ENCODE measurements at regions of chr13 and their contacts with region 1.

Region 1: DNA sequence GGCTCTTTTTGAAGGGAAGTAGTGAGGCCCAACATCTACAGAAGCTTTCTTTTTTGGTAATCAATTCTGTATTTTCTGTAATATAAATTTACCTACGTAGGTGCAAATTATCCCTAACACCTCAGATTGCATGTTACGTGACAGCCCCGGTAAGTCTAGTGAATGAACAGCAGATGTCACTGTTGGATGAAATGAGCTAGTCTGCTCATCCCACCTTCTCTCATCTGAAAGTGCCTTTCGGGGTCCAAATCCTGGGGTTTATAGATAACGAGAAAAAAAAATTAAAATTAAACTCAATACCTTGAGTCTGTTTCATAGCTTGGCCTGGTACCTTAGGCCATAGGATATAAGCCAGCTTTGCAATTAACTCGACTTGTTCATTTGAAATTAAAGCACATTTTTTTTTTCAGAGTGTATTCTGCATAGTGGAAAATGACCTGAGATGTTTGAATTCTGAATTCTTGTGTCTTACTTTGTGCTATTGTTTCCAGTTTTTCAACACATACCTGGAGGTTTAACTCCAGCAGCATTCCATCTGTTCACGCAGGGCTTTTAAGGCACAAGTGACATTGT is 548.2 kb downstream of the GPC5 start:
- DNase-seq: no peak
- H3K4me3 ChIP-seq: no peak overlapping the region
- H3K27ac ChIP-seq: no peak overlapping the region
- H3K4me1 ChIP-seq: no peaks in the 10 kb centered on the region
- H3K27me3 ChIP-seq: no peaks in the 10 kb centered on the region
- CTCF ChIP-seq: peak; percentile 3 to 70 (median 70)
- EP300 ChIP-seq: no peak
- POLR2A ChIP-seq: no peak
- RAD21 ChIP-seq: peak; percentile 85 to 87

Region 2: GRCh38 chr13:91725646-91726045 is 220.9 kb before region 1 on chr13:
- CTCF ChIA-PET with region 1: no interaction called
- POLR2A ChIA-PET with region 1: no interaction called
- DNase-seq: no peak
- H3K4me3 ChIP-seq: no peak overlapping the region
- H3K27ac ChIP-seq: no peak overlapping the region
- H3K4me1 ChIP-seq: no peaks in the 10 kb centered on the region
- H3K27me3 ChIP-seq: no peaks in the 10 kb centered on the region
- CTCF ChIP-seq: no peak
- EP300 ChIP-seq: no peak
- POLR2A ChIP-seq: no peak
- RAD21 ChIP-seq: no peak

Region 3: DNA sequence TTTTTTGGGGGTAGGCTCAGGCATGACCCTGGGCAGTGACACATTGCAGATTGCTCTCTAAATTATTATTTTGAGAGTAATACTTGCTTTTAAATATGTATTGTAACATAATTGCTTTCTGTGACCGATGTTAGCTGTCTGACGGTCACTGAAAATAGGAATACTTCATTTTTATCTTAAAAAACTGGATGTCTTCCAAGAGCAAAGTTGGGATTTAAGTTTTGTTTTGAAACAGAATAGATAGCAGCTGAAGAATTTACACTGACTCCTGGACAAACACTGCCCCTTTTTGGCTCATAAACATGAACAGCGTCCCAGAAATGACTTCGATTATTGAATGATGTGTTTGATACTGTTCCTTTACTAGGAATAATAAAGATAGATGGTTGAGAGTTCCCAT is 12.2 kb before region 1 on chr13:
- CTCF ChIA-PET with region 1: interaction called, 15 read pairs
- POLR2A ChIA-PET with region 1: no interaction called
- DNase-seq: no peak
- H3K4me3 ChIP-seq: no peak overlapping the region
- H3K27ac ChIP-seq: no peak overlapping the region
- H3K4me1 ChIP-seq: no peaks in the 10 kb centered on the region
- H3K27me3 ChIP-seq: no peaks in the 10 kb centered on the region
- CTCF ChIP-seq: no peak
- EP300 ChIP-seq: no peak
- POLR2A ChIP-seq: no peak
- RAD21 ChIP-seq: no peak

Region 4: DNA sequence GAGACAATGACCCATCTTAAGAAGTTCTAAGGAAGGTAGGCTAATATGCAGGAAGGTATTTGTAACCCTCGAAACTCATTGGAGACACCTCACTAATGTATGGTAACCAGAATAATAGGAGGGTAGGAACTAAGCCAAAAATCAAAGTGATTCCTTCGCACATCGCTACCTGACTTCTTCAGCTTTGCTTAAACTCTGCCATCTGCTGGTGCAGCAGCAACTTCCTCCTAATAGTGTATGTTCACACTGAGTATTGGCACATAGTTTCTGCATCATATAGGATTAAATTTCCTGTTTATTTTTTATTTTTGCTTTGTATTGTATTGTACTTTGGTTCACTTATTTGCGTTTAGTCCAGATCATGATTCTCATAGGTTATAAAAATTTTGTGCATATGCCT is 128.1 kb after region 1 on chr13:
- CTCF ChIA-PET with region 1: interaction called, 24 read pairs
- POLR2A ChIA-PET with region 1: no interaction called
- DNase-seq: no peak
- H3K4me3 ChIP-seq: no peak overlapping the region
- H3K27ac ChIP-seq: no peak overlapping the region
- H3K4me1 ChIP-seq: no peaks in the 10 kb centered on the region
- H3K27me3 ChIP-seq: peaks cover 0 to 1% (median 0%) of the 10 kb centered on the region in 4 experiments; a peak in 1 of 7 replicates
- CTCF ChIP-seq: peak in 2 of 3 experiments; percentile 59 to 68; a peak in 3 of 4 replicates
- EP300 ChIP-seq: no peak
- POLR2A ChIP-seq: no peak
- RAD21 ChIP-seq: peak; percentile 59 to 66

Measured in H1 (cell line).